ENCODE measurements at regions of chr11 and their contacts with region 1.

Region 1: DNA sequence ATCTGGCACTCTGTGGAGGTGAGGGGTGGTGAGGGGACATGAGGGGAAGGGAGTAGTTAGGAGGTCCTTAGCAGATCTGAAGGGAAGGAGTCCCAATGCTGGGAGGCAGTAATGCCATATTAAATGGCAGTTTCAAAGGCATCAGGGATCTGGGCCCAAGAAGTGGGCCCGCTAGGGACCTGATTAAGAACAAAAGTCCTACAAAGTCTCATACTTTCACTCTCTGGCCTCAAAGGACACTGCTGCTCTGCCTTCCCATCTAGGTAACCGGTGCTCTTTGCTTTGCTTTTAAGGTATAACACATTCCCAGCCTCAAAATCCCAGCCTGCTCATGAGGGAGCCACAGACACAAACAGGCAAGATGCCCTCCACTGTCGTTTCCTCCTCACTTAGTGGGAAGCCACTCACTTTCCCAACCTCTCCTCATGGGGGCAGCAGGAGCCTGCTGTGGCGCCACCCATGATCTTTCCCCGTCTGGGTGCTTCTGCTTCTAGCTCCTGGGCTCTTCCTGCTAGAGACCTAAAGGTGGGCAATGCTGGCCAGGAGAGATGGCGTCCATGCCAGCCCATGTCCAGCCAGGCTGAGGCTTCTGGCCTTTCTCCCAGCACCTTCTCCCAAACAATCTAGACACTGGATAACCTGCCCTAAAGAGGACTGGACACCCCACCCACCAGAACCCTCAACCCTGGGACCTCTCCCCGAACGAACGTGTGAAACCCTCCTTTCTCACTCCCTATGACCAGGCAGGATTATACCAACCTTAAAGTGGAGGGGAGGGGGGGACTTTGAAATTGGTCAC is 68.3 kb downstream of the PLEKHA7 start:
- DNase-seq: peak; percentile 75 to 83
- H3K4me3 ChIP-seq: no peak overlapping the region
- H3K4me3 Mint-ChIP-seq: no peak overlapping the region
- H3K27ac Mint-ChIP-seq: peak overlapping the region; percentile 3
- H3K4me1 ChIP-seq: peaks cover 9% of the 10 kb centered on the region; the same call in 1 of the 2 replicates
- H3K4me1 Mint-ChIP-seq: peaks cover 16% of the 10 kb centered on the region
- H3K27me3 ChIP-seq: no peaks in the 10 kb centered on the region
- H3K27me3 Mint-ChIP-seq: no peaks in the 10 kb centered on the region
- CTCF ChIP-seq: peak; percentile 87 to 97

Region 2: GRCh38 chr11:16678466-16679116 is 267.3 kb before region 1 on chr11:
- CTCF ChIA-PET with region 1: no interaction called
- POLR2A ChIA-PET with region 1: no interaction called
- intact Hi-C with region 1: no loop called
- DNase-seq: no peak
- H3K4me3 ChIP-seq: no peak overlapping the region
- H3K4me3 Mint-ChIP-seq: no peak overlapping the region
- H3K27ac Mint-ChIP-seq: no peak overlapping the region
- H3K4me1 ChIP-seq: no peaks in the 10 kb centered on the region
- H3K4me1 Mint-ChIP-seq: no peaks in the 10 kb centered on the region
- H3K27me3 ChIP-seq: no peaks in the 10 kb centered on the region; the same call in 1 of the 2 replicates
- H3K27me3 Mint-ChIP-seq: peaks cover 15% of the 10 kb centered on the region
- CTCF ChIP-seq: no peak

Region 3: DNA sequence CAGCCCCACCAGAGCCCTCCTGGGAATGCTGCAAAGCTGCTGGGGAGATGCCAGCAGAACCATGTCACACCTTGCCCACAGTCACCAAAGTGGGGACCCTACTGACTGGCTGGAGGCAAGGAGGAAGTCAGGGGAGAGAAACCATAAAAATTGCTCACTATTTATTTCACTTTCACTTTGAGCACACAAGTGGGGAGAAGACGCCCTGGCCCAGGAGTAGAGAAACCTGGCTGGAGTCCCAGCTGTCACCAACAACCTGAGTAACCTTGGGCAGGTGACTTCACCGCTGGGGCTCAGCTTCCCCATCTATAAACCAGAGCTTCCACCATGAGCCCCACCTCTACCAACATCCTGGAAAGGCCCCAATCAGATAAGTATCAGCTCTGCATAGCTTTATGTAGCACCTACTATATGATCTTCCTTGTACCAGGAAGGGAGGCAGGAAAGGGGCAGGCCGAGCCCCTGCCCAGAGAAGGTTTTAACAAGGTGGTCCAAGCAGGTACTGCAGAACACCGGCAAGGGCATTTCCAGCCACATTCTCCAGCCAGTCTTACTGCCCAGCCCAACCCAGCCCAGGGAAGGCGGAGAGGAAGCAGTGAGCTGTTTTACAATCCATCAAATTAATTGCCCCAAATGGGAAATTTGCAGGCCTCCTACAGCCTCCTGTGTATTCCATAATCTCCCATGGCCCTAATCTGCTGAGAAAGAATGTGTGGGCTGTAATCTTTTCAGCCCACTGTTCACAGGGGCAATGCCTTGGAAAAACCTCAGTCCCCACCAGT is 40.8 kb after region 1 on chr11:
- CTCF ChIA-PET with region 1: interaction called, 3 read pairs
- POLR2A ChIA-PET with region 1: no interaction called
- intact Hi-C with region 1: loop called (anchors 5 kb)
- DNase-seq: no peak
- H3K4me3 ChIP-seq: no peak overlapping the region
- H3K4me3 Mint-ChIP-seq: no peak overlapping the region
- H3K27ac Mint-ChIP-seq: no peak overlapping the region
- H3K4me1 ChIP-seq: peaks cover 25% of the 10 kb centered on the region
- H3K4me1 Mint-ChIP-seq: peaks cover 21% of the 10 kb centered on the region
- H3K27me3 ChIP-seq: no peaks in the 10 kb centered on the region
- H3K27me3 Mint-ChIP-seq: no peaks in the 10 kb centered on the region
- CTCF ChIP-seq: no peak

Region 4: DNA sequence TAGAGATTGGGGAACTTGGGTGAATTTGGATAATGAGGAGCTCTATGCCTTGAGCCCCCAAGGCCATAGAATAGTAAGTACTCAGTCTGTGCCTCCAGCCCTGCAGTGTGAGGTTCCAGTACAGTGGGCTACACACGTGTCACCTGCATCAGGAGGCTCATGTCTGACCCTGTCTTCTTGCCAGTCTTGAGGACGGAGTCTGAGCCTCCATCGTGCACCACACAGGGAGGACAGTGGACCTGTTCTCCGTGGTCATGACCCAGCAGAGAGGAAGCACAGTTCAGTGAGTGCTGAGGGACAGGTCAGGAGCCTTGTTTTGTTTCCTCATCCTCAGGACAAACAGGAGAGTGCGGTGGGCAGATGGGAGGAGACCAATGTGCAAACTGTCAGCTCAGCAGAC is 100.8 kb after region 1 on chr11:
- CTCF ChIA-PET with region 1: interaction called, 3 read pairs
- POLR2A ChIA-PET with region 1: no interaction called
- intact Hi-C with region 1: loop called (anchors 5 kb)
- DNase-seq: no peak
- H3K4me3 ChIP-seq: no peak overlapping the region
- H3K4me3 Mint-ChIP-seq: no peak overlapping the region
- H3K27ac Mint-ChIP-seq: peak overlapping the region; percentile 59
- H3K4me1 ChIP-seq: peaks cover 35% of the 10 kb centered on the region
- H3K4me1 Mint-ChIP-seq: peaks cover 30% of the 10 kb centered on the region
- H3K27me3 ChIP-seq: no peaks in the 10 kb centered on the region
- H3K27me3 Mint-ChIP-seq: no peaks in the 10 kb centered on the region
- CTCF ChIP-seq: no peak